ENCODE measurements at regions of chr7 and their contacts with region 1.

Region 1: DNA sequence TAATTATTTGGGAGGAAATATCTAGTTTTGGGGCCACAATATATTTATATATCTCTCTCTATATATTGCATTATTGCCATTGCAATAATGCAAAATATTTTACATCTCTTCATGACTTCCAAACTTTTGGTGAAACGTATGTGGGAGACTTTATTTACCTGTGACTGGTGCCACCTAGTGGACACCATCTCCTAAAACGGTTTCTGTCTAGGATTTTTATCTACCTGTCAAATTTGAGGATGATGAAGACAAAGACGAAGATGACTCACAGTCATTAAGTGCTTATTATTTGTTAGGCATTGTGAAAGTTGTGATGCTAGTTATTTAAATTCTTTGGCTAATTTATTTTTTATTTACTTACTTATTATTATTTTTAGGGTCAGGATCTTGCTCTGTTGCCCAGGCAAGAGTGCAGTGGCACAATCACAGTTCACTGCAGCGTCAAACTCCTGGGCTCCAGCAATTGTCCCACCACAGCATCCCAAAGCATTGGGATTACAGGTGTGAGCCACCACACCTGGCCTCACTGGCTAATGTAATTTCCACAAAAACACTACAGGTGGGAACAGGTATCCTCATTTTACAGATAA is 18.7 kb upstream of the CBLL1 start:
- DNase-seq: no peak
- ATAC-seq: peak; percentile 60 to 76 (median 71)
- H3K4me3 ChIP-seq: no peak overlapping the region
- H3K27ac ChIP-seq: no peak overlapping the region
- H3K4me1 ChIP-seq: no peaks in the 10 kb centered on the region
- H3K27me3 ChIP-seq: no peaks in the 10 kb centered on the region
- CTCF ChIP-seq: peak; percentile 71 to 79 (median 74)
- POLR2A ChIP-seq: no peak

Region 2: DNA sequence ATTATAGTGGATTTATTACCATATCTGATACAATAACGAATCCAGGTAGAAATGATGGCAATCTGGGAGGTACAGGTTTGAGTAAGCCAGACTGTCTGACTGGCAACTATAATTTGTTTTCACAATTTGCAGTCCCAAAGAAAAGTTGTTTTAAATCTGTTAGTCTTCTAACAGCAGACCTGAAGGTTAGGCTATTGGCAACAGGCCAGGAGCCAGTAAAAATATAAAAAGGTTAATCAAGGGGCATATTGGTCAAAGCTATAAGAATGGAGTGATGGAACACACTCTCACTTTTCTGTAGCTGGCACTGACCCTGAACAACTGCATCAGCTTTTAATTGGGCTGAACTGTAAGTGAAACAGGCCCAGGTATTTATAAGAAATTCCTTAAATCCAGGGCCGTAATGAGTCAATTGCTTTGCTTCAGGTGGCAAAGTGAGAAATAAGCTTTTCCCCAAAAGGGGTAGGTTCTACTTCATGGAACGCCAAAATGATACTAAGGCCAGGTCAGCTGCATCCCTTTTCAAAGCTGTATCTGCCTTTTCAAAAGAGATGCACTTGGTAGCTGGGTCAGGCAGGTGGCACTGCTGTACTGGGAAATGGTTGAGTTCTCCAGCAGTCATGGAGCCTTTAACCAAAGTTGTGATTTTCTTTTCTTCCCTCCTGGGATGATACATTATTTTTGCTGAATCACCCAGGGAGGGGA is 262.4 kb before region 1 on chr7:
- intact Hi-C with region 1: loop called (anchors 10 kb)
- DNase-seq: peak; percentile 44 to 61 (median 57)
- ATAC-seq: peak; percentile 93 to 98 (median 96)
- H3K4me3 ChIP-seq: no peak overlapping the region
- H3K27ac ChIP-seq: no peak overlapping the region
- H3K4me1 ChIP-seq: no peaks in the 10 kb centered on the region
- H3K27me3 ChIP-seq: no peaks in the 10 kb centered on the region
- CTCF ChIP-seq: peak; percentile 67 to 77 (median 72)
- POLR2A ChIP-seq: no peak

Region 3: DNA sequence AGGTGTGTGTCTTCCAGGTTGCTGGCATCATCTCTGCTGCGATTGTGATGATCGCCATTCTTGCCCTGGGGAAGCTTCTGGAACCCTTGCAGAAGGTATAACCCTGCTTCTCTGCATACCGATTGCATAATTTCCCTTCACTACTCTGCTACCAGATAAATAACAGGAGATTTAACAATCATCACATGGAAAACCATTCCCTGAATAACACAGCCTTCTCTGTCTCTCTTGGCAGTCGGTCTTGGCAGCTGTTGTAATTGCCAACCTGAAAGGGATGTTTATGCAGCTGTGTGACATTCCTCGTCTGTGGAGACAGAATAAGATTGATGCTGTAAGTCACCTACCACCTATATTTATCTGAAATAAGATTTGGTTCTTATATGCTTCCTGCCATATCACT is 30.9 kb before region 1 on chr7:
- intact Hi-C with region 1: no loop called
- DNase-seq: no peak
- ATAC-seq: no peak
- H3K4me3 ChIP-seq: no peak overlapping the region
- H3K27ac ChIP-seq: no peak overlapping the region
- H3K4me1 ChIP-seq: no peaks in the 10 kb centered on the region
- H3K27me3 ChIP-seq: no peaks in the 10 kb centered on the region
- CTCF ChIP-seq: no peak
- POLR2A ChIP-seq: no peak

Region 4: DNA sequence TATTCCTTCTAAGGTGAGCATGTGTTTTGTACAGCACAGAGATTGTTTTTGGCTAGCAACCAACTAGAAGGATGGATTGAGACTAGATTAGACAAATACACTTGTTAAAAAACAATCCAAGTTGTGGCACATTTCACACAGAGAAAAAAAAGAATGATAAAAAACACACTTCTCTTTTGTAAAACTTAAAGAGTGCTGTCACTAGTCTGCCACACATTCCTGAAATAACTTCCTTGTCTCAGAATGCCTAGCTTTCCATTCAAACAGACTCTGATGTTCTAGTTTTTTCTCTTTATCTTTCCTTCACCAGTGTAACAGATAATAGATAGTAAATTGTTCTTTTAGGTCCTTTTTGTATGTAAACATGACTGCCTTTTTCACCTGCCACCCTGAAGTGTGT is 177.1 kb after region 1 on chr7:
- intact Hi-C with region 1: no loop called
- DNase-seq: no peak
- ATAC-seq: no peak
- H3K4me3 ChIP-seq: no peak overlapping the region
- H3K27ac ChIP-seq: no peak overlapping the region
- H3K4me1 ChIP-seq: peaks cover 0 to 26% (median 10%) of the 10 kb centered on the region in 4 donors
- H3K27me3 ChIP-seq: no peaks in the 10 kb centered on the region
- CTCF ChIP-seq: no peak
- POLR2A ChIP-seq: no peak

Measured in right lobe of liver (tissue), 6 donors.